Breast epithelium (tissue), 4 donors: ENCODE measurements at regions of chr11 and their contacts with region 1.

Region 1: DNA sequence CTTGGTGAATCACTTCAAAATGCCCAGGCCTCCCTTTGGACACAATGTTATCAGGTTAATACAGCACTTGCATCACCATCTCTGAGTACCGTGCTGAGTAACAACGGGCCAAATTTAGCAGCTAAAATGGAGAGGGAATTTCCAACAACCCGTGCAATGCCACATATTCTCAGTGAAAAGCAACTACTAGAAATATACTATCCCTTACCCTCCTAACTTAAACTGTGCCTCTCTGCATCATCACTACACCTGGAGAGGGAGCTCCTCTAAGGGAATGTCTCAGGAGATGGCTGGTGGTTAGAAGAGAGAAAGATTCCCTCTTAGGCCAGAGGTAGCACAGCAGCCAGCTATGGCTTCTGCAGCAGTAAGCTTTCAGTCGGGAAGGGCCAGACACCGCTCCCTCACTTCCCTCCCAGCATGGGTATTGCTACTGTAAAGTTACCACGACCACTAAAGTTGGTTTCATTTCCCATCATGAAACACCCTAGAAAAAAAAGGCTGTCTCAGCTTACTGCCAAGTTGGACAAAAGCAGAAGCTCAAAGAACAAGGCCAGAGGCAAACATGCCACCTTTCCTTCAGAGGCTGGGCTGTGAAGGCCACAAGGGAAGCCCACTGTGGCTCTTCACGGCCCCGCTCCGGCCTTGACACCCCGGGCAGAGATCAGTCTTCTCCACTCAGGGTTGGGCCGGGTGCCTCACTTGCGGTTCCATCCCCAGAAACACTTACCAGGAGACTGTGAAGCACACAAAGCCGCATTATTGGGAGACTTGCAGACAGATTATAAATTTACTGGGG is 3.9 kb downstream of the MAML2 start:
- DNase-seq: peak in 1 of 2 donors; percentile 39
- H3K4me3 ChIP-seq: peak overlapping the region; percentile 62 to 87 (median 72)
- H3K27ac ChIP-seq: peak overlapping the region; percentile 94 to 96
- H3K4me1 ChIP-seq: peaks cover 0 to 3% of the 10 kb centered on the region in 2 donors
- H3K27me3 ChIP-seq: no peaks in the 10 kb centered on the region
- CTCF ChIP-seq: no peak
- POLR2A ChIP-seq: no peak

Region 2: GRCh38 chr11:94553938-94554337 is 1785.2 kb before region 1 on chr11:
- intact Hi-C with region 1: loop called (anchors 10 kb)
- DNase-seq: no peak
- H3K4me3 ChIP-seq: no peak overlapping the region
- H3K27ac ChIP-seq: no peak overlapping the region
- H3K4me1 ChIP-seq: no peaks in the 10 kb centered on the region
- H3K27me3 ChIP-seq: no peaks in the 10 kb centered on the region
- CTCF ChIP-seq: no peak
- POLR2A ChIP-seq: no peak

Region 3: DNA sequence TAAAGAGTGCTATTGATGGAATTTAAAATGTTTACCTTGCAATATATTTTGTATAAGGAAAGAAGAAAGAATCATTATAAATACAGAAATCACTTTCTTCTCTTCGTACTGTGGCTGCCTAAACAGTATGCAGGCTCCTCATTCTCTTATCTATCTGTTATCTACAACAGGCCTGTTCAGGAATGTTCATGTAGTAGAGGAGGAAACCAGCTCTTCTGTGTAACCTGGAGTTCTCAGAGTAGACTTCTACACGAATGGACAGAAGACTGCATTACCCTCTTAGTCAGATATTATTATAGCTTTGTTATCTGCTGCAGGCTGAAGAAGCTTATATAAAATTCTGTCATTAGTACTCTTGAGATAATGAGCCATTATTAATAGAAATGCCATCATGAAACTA is 1455.8 kb after region 1 on chr11:
- intact Hi-C with region 1: no loop called
- DNase-seq: no peak
- H3K4me3 ChIP-seq: no peak overlapping the region
- H3K27ac ChIP-seq: no peak overlapping the region
- H3K4me1 ChIP-seq: no peaks in the 10 kb centered on the region
- H3K27me3 ChIP-seq: no peaks in the 10 kb centered on the region
- CTCF ChIP-seq: no peak
- POLR2A ChIP-seq: no peak